Endothelial cell of umbilical vein (primary cell): ENCODE measurements at regions of chr4 and their contacts with region 1.

Region 1: GRCh38 chr4:17810260-17811077 is at the starts of genes DCAF16 and NCAPG:
- DNase-seq: peak; percentile 100
- H3K4me3 ChIP-seq: peak within 1 kb of the TSS; percentile 74 to 97 (median 86)
- H3K27ac ChIP-seq: peak within 1 kb of the TSS; percentile 68
- H3K4me1 ChIP-seq: peaks cover 45% of the 10 kb centered on the region
- H3K27me3 ChIP-seq: no peaks in the 10 kb centered on the region
- CTCF ChIP-seq: no peak
- POLR2A ChIP-seq: peak; percentile 94
- total RNA-seq, gene DCAF16: 29.0 and 35.0 TPM in 2 replicates
- total RNA-seq, gene NCAPG: 63.4 and 66.4 TPM in 2 replicates

Region 2: GRCh38 chr4:17511950-17512795 is 298.3 kb before region 1 on chr4 and contains the start of gene QDPR:
- CTCF ChIA-PET with region 1: interaction called, 4 read pairs
- POLR2A ChIA-PET with region 1: no interaction called
- dilution Hi-C with region 1: no loop called
- intact Hi-C with region 1: loop called (anchors 1 kb)
- DNase-seq: peak; percentile 77
- H3K4me3 ChIP-seq: peak within 1 kb of the TSS; percentile 58 to 97 (median 74)
- H3K27ac ChIP-seq: peak within 1 kb of the TSS; percentile 56
- H3K4me1 ChIP-seq: peaks cover 15% of the 10 kb centered on the region
- H3K27me3 ChIP-seq: peaks cover 14% of the 10 kb centered on the region in 2 experiments
- CTCF ChIP-seq: peak in 1 of 2 donors; percentile 45
- POLR2A ChIP-seq: peak; percentile 67
- total RNA-seq, gene QDPR: 20.9 and 24.6 TPM in 2 replicates

Region 3: DNA sequence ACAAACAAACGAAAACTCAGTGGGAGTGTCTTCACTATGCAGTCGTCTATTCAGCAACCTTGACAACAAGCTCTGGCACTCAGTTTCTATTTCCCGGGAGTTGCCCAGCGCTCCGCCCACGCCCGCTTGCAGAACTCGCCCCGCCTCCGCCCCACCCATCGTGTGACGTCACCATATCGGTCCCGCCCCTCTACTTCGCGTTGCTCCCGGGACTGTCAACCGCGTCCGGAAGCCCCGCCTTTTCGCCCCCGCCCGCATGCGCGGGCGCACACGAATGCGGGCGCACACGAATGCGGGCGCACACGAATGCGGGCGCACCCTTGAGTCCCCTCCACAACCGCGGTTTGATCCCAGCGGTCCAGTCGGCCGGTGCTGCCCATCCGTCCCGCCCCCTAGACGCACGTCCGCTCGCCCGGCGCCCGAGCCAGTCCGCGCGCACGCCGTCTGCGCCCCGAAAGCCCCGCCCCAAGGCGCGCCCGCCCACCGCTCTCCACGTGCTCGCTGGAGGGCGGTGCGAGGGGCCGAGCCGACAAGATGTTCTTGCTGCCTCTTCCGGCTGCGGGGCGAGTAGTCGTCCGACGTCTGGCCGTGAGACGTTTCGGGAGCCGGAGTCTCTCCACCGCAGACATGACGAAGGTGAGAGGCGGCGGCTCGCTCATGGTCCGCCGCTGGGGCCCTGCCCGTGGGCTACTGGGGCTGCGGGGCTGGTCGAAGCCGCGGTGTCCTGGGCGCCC is 233.4 kb before region 1 on chr4 and contains the start of gene LAP3:
- CTCF ChIA-PET with region 1: no interaction called
- POLR2A ChIA-PET with region 1: no interaction called
- dilution Hi-C with region 1: no loop called
- intact Hi-C with region 1: loop called (anchors 1 kb)
- DNase-seq: peak; percentile 97
- H3K4me3 ChIP-seq: peak within 1 kb of the TSS; percentile 61 to 96 (median 90)
- H3K27ac ChIP-seq: peak within 1 kb of the TSS; percentile 82
- H3K4me1 ChIP-seq: peaks cover 36% of the 10 kb centered on the region
- H3K27me3 ChIP-seq: no peaks in the 10 kb centered on the region
- CTCF ChIP-seq: no peak
- POLR2A ChIP-seq: peak; percentile 94
- total RNA-seq, gene LAP3: 73.7 and 94.8 TPM in 2 replicates

Region 4: DNA sequence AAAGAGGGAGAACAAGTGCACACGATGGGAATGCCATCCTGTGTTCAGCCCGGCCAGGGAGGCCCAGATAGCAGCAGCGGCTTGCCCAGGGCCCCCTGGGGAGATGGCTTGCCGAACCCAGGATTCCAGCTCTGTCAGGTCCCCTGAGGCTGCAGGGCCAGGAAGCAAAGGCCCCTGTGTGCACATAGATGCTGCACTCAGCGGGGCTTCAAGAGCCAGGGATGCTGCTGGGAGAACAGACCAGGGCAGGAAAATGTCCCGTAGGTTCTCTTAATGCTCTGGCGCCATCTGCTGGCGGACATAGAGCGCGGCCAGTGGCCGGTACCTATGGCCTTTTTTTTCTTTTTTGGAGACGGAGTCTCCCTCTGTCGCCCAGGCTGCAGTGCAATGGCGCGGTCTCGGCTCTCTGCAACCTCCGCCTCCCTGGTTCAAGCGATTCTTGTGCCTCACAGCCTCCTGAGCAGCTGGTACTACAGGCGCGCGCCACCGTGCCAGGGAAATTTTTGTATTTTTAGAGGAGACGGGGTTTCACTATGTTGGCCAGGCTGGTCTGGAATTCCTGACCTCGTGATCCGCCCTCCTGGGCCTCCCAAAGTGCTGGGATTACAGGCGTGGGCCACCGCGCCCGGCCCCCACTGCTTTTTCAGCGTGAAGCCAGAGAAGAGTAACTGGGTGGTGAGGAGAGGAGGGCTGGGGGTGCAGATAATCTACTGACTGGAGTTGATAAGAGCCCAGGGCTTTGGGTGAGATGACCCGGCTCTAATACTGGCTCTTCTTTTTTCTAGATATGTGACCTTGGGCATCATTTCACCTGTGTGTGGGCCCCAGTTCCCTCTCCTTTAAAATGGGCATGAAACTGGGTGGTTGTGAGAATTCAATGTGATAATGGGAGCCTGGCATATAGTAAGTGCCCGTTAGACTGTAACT is 173.5 kb before region 1 on chr4:
- CTCF ChIA-PET with region 1: no interaction called
- POLR2A ChIA-PET with region 1: no interaction called
- dilution Hi-C with region 1: no loop called
- intact Hi-C with region 1: loop called (anchors 5 kb)
- DNase-seq: peak; percentile 56
- H3K4me3 ChIP-seq: no peak overlapping the region
- H3K27ac ChIP-seq: no peak overlapping the region
- H3K4me1 ChIP-seq: no peaks in the 10 kb centered on the region
- H3K27me3 ChIP-seq: no peaks in the 10 kb centered on the region
- CTCF ChIP-seq: peak; percentile 79 to 93
- POLR2A ChIP-seq: no peak

Region 5: DNA sequence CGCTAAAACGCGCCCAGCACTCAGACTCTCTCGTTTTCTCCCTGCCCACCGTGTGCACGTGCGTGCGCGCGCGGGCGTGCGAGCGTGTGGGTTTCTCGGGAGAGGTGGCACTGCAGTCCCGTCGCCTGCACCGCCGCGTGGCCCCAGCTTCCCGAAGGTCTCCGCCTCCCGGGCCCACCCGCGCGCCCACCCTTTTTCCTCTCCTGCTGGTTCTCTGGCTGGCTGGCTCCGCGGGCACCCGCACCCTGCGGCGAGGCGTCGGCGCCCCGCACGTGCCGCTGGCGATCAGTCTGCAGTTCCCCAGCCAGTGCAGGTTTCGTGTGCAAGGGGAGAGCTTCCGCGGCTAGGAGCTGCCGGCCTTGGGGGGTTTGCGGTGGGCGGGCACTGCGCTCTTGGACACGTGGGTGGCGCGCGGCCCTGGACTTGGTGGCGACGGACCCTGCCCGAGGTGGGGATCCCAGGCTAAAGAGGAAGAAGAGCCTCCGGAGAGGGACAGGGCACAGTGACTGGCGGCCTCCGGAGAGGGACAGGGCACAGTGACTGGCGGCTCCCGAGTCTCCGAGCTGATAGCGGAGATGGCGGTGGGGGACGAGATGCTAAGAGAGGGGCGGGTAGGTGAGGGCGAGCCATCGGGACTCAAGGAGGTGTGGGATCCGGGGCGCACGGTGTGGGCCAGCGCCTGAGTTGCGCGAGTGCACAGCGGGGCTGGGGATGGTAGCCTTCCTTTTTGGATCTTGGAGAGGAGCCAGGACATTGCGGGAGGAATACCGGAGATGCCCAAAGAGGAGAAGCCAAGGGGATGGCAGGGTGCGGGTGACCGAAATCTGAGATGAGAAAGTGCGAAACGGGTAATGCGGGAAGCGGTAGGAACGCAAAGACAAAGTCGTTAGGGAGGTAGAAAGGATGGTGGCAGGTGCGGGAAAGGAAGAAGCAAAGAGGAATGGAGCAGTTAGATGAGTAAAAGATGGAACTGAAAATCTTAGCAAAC is 28.9 kb before region 1 on chr4 and contains the start of gene FAM184B:
- CTCF ChIA-PET with region 1: no interaction called
- POLR2A ChIA-PET with region 1: no interaction called
- dilution Hi-C with region 1: no loop called
- intact Hi-C with region 1: no loop called
- DNase-seq: peak; percentile 5
- H3K4me3 ChIP-seq: peak within 1 kb of the TSS in 2 of 3 experiments; percentile 7 to 19
- H3K27ac ChIP-seq: no peak within 1 kb of the TSS
- H3K4me1 ChIP-seq: peaks cover 3% of the 10 kb centered on the region
- H3K27me3 ChIP-seq: peaks cover 27 to 39% of the 10 kb centered on the region in 2 experiments
- CTCF ChIP-seq: no peak
- POLR2A ChIP-seq: no peak
- total RNA-seq, gene FAM184B: not detected in 2 replicates

Region 6: DNA sequence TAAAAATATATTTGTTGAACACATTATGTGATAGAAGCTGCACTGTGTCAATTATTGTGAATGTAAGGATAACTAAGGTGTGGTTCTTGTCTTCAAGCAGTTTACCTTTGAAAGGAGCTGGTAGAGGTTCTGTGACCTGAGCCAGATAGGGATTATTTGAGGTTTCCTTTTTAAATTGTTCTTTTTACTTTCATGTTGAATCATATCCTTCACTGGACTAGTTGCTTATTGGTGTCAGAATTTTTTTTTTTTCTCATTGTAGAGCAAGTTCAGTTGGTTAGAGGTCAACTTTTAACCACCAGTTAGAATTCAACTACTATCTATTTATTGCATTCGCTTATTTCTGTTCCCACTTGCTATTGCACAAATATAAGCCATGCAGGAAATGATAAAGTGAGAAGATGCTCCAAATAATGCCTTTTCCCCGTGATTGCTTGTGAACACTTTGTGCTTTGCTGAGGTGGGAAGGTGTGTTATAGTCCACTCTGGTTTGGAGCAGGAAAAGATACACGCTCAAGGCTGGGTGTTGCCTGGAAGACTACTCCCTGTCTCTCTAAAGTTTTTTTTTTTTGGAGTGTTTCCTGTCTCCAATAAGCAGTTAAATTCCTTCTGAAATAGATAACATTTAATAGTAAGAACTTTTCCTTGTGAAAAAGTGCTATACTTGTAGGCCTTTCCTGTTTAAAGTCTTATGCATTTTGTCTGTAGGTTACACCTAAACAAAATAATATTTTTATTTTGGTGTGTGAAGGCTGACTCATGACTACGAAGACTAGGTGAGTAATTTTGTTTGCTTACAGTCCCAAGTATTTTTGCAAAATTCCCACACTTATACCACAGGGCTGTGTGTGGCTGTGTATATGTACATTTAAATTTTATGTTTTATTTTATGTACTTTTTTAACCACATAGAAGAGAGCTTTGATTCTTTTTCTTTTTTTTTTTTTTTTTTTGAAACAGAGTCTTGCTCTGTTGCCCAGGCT is 294.9 kb after region 1 on chr4:
- CTCF ChIA-PET with region 1: no interaction called
- POLR2A ChIA-PET with region 1: no interaction called
- dilution Hi-C with region 1: no loop called
- intact Hi-C with region 1: loop called (anchors 2 kb)
- DNase-seq: peak; percentile 57
- H3K4me3 ChIP-seq: no peak overlapping the region
- H3K27ac ChIP-seq: peak overlapping the region; percentile 46
- H3K4me1 ChIP-seq: peaks cover 36% of the 10 kb centered on the region
- H3K27me3 ChIP-seq: no peaks in the 10 kb centered on the region
- CTCF ChIP-seq: no peak
- POLR2A ChIP-seq: no peak

Region 7: GRCh38 chr4:18536428-18536827 is 726.0 kb after region 1 on chr4:
- CTCF ChIA-PET with region 1: interaction called, 3 read pairs
- POLR2A ChIA-PET with region 1: no interaction called
- dilution Hi-C with region 1: no loop called
- intact Hi-C with region 1: loop called (anchors 5 kb)
- DNase-seq: peak; percentile 32
- H3K4me3 ChIP-seq: no peak overlapping the region
- H3K27ac ChIP-seq: no peak overlapping the region
- H3K4me1 ChIP-seq: peaks cover 45% of the 10 kb centered on the region
- H3K27me3 ChIP-seq: no peaks in the 10 kb centered on the region
- CTCF ChIP-seq: peak; percentile 16 to 37
- POLR2A ChIP-seq: no peak